H1 (cell line): ENCODE measurements at regions of chr16 and their contacts with region 1.

Region 1: DNA sequence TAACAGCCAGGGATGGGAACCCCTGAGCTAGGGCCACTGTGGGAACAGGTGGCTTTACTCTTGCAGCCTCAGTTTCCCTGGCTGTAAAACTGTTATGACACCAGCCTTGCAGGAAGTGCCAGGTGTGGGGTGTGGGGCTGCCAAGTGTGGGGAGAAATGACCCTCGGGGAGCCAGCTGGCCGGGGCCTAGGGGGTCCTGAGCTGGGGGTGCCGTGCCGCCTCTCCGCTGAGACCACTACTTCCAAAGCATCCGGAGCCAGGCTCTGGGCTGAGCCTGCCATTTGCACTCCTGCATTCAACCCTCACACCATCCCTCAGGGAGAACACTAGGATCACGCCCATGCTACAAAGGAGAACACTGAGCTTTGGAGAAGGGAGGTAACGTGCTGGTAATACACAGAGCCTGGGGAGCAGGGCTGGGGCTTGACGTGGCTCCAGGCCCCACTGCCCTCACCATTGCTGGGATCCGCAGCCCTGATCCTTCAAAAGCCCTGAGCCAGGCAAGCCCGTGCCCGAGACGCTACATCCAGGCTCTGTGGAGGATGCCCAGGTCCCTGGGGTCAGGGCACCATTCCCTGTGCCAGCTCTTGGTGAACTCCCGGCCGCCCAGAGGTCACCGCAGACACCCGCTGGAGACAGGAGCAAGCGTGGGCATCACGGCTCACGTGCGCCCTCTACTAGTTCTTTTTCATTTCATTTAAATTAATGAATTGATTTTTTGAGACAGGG is 28.8 kb upstream of the GINS2 start:
- DNase-seq: peak in 1 of 2 experiments; percentile 84
- H3K4me3 ChIP-seq: no peak overlapping the region
- H3K27ac ChIP-seq: no peak overlapping the region
- H3K4me1 ChIP-seq: peaks cover 0 to 10% (median 7%) of the 10 kb centered on the region in 4 experiments; a peak in 6 of 7 replicates
- H3K27me3 ChIP-seq: peaks cover 0 to 7% (median 2%) of the 10 kb centered on the region in 4 experiments; a peak in 3 of 7 replicates
- CTCF ChIP-seq: peak; percentile 57 to 89 (median 69)
- EP300 ChIP-seq: no peak
- POLR2A ChIP-seq: no peak
- RAD21 ChIP-seq: peak; percentile 81 to 86

Region 2: GRCh38 chr16:85524630-85525419 is 192.7 kb before region 1 on chr16:
- CTCF ChIA-PET with region 1: no interaction called
- POLR2A ChIA-PET with region 1: no interaction called
- DNase-seq: no peak
- H3K4me3 ChIP-seq: no peak overlapping the region
- H3K27ac ChIP-seq: peak overlapping the region; percentile 14; the same call in 1 of the 2 replicates
- H3K4me1 ChIP-seq: peaks cover 6 to 37% (median 18%) of the 10 kb centered on the region in 4 experiments
- H3K27me3 ChIP-seq: no peaks in the 10 kb centered on the region
- CTCF ChIP-seq: no peak
- EP300 ChIP-seq: no peak
- POLR2A ChIP-seq: no peak
- RAD21 ChIP-seq: no peak

Region 3: DNA sequence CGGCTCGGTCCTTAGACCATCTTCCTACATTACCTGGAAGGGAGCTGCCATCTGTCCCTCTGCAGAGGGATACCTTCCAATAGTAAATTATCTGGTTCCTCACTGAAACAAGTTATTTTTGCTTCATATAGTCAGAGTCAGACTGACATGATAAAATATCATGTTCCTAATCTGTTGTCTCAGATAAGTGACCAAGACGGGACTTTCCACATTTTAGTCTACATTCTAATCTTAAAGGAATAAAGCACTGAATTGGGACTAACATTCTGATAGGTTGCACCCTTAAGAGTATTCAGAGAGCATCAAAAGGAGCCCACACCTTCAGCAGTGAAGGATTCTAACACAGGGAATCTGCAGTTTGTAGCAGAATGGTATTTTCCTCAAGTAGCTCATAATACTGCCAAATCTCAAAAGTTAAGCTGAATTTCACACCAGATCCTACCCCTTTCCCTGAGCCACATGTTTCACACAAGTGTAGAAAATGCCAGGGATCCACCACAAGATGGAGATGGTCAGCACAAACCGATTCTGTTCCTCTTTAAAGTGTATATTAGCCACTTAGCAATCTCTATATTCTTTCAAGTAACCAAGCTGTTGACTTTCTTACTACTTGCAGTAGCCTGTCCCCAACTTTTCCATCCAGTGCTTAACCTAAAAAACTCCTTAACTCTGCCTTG is 42.2 kb before region 1 on chr16:
- CTCF ChIA-PET with region 1: interaction called, 620 read pairs
- POLR2A ChIA-PET with region 1: interaction called, 23 read pairs
- DNase-seq: no peak
- H3K4me3 ChIP-seq: no peak overlapping the region
- H3K27ac ChIP-seq: no peak overlapping the region
- H3K4me1 ChIP-seq: no peaks in the 10 kb centered on the region
- H3K27me3 ChIP-seq: no peaks in the 10 kb centered on the region
- CTCF ChIP-seq: peak in 2 of 3 experiments; percentile 47 to 68; a peak in 2 of 4 replicates
- EP300 ChIP-seq: no peak
- POLR2A ChIP-seq: peak in 1 of 2 experiments; percentile 46; a peak in 2 of 3 replicates
- RAD21 ChIP-seq: peak; percentile 35 to 55

Region 4: GRCh38 chr16:85688586-85689284 is 28.8 kb before region 1 on chr16 and contains the start of gene GINS2:
- CTCF ChIA-PET with region 1: interaction called, 620 read pairs
- POLR2A ChIA-PET with region 1: interaction called, 14 read pairs
- DNase-seq: peak; percentile 60 to 86
- H3K4me3 ChIP-seq: peak within 1 kb of the TSS; percentile 59 to 90 (median 78)
- H3K27ac ChIP-seq: no peak within 1 kb of the TSS; the same call in 1 of the 2 replicates
- H3K4me1 ChIP-seq: peaks cover 0 to 5% (median 0%) of the 10 kb centered on the region in 4 experiments; a peak in 1 of 7 replicates
- H3K27me3 ChIP-seq: no peaks in the 10 kb centered on the region
- CTCF ChIP-seq: no peak
- EP300 ChIP-seq: no peak
- POLR2A ChIP-seq: peak in 1 of 2 experiments; percentile 74; a peak in 2 of 3 replicates
- RAD21 ChIP-seq: no peak
- total RNA-seq, gene GINS2: 51.4 and 59.1 TPM in 2 replicates

Region 5: DNA sequence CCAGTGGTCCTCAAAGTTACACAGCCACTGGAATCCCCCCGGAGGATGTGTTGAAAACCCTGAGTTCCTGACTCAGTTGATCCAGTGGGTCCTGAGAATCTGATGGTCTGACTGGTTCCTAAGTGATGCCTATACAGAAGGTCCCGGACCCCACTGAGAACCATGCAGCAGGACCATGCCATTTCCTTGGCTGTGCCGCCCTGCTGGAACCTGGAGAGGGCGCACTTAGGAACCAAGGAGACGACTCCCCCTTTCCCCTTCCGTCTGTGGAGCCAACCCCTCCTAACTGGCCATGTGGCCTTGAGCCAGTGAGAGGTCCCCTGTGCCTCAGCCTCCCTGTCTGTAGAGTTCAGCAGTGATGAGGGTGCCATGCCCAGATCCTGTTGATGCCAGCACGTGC is 11.3 kb after region 1 on chr16:
- CTCF ChIA-PET with region 1: interaction called, 18 read pairs
- POLR2A ChIA-PET with region 1: interaction called, 8 read pairs
- DNase-seq: peak in 1 of 2 experiments; percentile 79
- H3K4me3 ChIP-seq: no peak overlapping the region
- H3K27ac ChIP-seq: no peak overlapping the region
- H3K4me1 ChIP-seq: peaks cover 0 to 5% (median 4%) of the 10 kb centered on the region in 4 experiments; a peak in 3 of 7 replicates
- H3K27me3 ChIP-seq: no peaks in the 10 kb centered on the region; a peak in 1 of 7 replicates
- CTCF ChIP-seq: peak; percentile 62 to 91 (median 89)
- EP300 ChIP-seq: no peak
- POLR2A ChIP-seq: no peak
- RAD21 ChIP-seq: peak; percentile 32 to 62

Region 6: DNA sequence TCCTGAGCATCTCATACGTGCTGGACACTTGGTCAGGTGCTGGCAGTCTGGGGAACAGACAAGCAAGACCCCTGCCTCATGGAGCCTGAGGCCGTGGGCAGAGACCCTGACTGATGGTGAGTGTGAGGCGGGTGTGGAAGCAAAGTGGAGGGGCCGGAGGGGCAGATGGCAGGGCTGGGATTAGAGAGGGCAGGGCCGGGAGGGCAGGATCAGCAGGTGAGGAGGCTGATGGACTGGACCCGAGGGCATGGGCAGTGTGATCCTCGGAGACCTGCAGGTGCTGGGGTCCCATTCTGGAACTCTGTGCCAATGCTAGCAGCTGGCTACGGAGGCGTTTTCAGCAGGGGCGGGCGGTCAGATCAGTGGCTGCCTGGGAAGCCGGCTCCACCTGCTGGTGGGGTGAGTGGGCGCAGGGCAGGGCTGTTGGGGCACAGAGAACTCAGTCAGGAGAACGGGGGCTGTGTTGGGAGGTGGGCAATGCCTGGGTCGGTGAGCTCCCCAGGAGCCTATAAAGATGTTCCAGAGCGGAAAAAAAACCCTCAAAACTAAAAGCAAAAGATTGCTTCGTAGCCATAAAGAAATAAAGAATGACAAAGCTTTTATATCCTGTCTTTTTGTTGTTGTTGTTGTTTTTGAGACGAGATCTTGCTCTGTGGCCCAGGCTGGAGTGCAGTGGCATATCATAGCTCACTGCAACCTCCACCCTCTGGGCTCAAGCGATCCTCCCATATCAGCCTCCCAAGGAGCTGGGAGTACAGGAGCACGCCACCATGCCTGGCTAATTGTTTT is 42.3 kb after region 1 on chr16:
- CTCF ChIA-PET with region 1: interaction called, 33 read pairs
- POLR2A ChIA-PET with region 1: no interaction called
- DNase-seq: peak in 1 of 2 experiments; percentile 75
- H3K4me3 ChIP-seq: no peak overlapping the region
- H3K27ac ChIP-seq: no peak overlapping the region
- H3K4me1 ChIP-seq: no peaks in the 10 kb centered on the region; a peak in 1 of 7 replicates
- H3K27me3 ChIP-seq: 0 out of 7 replicates have a peak, but pooled peaks cover 0 to 2% (median 0%) of the 10 kb centered on the region in 4 experiments
- CTCF ChIP-seq: peak; percentile 77 to 88 (median 83)
- EP300 ChIP-seq: no peak
- POLR2A ChIP-seq: no peak
- RAD21 ChIP-seq: peak; percentile 71 to 79

Region 7: DNA sequence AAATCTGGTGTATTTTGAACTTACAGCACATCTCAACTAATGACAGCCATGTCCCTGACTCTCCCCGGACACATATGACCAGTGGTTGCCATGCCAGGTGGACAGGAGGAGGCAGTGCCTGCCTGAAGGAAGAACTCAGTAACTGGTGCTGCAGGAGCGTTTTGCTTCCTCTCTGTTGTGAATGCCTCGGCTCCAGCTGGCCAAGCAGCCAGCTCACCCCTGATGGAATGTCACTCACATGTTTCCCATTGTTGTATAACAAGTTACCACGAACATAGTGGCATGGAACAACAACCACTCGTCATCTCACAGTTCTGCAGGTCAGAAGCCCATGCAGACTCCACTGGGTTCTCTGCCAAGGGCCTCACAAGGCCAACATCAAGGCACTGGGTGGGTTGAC is 161.3 kb after region 1 on chr16:
- CTCF ChIA-PET with region 1: no interaction called
- POLR2A ChIA-PET with region 1: no interaction called
- DNase-seq: no peak
- H3K4me3 ChIP-seq: no peak overlapping the region
- H3K27ac ChIP-seq: no peak overlapping the region
- H3K4me1 ChIP-seq: no peaks in the 10 kb centered on the region
- H3K27me3 ChIP-seq: peaks cover 0 to 3% (median 0%) of the 10 kb centered on the region in 4 experiments; a peak in 3 of 7 replicates
- CTCF ChIP-seq: peak in 2 of 3 experiments; percentile 9 to 12; a peak in 3 of 4 replicates
- EP300 ChIP-seq: no peak
- POLR2A ChIP-seq: no peak
- RAD21 ChIP-seq: peak in 1 of 2 experiments; percentile 32; a peak in 2 of 4 replicates